ENCODE measurements at regions of chr9 and their contacts with region 1.

Region 1: GRCh38 chr9:26955921-26956859 is at the start of gene IFT74:
- DNase-seq: peak; percentile 81 to 98 (median 94)
- ATAC-seq: peak; percentile 100
- H3K4me3 ChIP-seq: peak within 1 kb of the TSS; percentile 52 to 65
- H3K4me3 Mint-ChIP-seq: peak within 1 kb of the TSS; percentile 87 to 91 (median 89)
- H3K27ac ChIP-seq: peak within 1 kb of the TSS; percentile 67
- H3K27ac Mint-ChIP-seq: peak within 1 kb of the TSS; percentile 93 to 96
- H3K4me1 ChIP-seq: peaks cover 7 to 12% of the 10 kb centered on the region in 2 experiments
- H3K4me1 Mint-ChIP-seq: peaks cover 15 to 39% (median 36%) of the 10 kb centered on the region in 3 donors
- H3K27me3 ChIP-seq: no peaks in the 10 kb centered on the region
- H3K27me3 Mint-ChIP-seq: no peaks in the 10 kb centered on the region
- total RNA-seq, gene IFT74: 6.2 to 11.1 (median 8.9) TPM

Region 2: DNA sequence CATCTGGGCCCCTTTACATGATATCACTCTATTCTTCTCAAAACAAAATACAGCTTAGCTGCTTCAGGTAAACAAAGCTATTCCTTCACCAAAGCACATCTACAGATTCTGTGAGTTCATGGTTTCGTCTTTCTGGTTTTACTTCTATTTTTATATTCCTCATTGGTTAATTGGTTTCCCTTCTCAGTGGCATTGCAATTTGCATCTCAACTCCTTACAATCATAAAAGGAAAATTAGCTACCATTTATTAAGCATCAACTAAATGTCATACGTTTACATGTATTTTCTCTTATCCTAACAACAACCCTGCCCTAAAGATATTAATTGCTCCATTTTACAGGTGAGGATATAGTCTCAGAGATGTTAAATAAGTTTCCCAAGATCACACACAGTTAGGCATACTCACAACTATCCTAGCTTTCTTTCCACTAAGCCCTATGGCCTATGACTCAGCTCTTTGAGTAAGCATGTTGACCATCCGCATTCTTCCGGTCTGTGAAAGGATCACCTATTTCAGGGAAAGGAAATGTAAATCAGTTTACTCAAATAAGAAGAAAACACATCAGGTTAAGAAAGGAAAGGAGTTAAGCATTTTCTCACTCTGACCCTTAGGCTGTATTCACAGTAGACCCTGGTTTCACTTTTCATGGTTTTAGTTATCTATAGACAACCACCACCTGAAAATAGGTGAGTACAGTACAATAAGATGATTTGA is 209.7 kb before region 1 on chr9:
- CTCF ChIA-PET with region 1: no interaction called
- POLR2A ChIA-PET with region 1: no interaction called
- DNase-seq: no peak
- ATAC-seq: no peak
- H3K4me3 ChIP-seq: no peak overlapping the region
- H3K4me3 Mint-ChIP-seq: no peak overlapping the region
- H3K27ac ChIP-seq: no peak overlapping the region
- H3K27ac Mint-ChIP-seq: no peak overlapping the region
- H3K4me1 ChIP-seq: no peaks in the 10 kb centered on the region
- H3K4me1 Mint-ChIP-seq: peaks cover 0 to 4% (median 0%) of the 10 kb centered on the region in 3 donors
- H3K27me3 ChIP-seq: peaks cover 0 to 2% of the 10 kb centered on the region in 2 experiments
- H3K27me3 Mint-ChIP-seq: peaks cover 0 to 5% of the 10 kb centered on the region in 2 donors

Region 3: GRCh38 chr9:26850995-26851394 is 105.2 kb before region 1 on chr9:
- CTCF ChIA-PET with region 1: no interaction called
- POLR2A ChIA-PET with region 1: interaction called in 1 of 2 experiments, 12 read pairs
- DNase-seq: no peak
- ATAC-seq: no peak
- H3K4me3 ChIP-seq: no peak overlapping the region
- H3K4me3 Mint-ChIP-seq: no peak overlapping the region
- H3K27ac ChIP-seq: no peak overlapping the region
- H3K27ac Mint-ChIP-seq: no peak overlapping the region
- H3K4me1 ChIP-seq: no peaks in the 10 kb centered on the region
- H3K4me1 Mint-ChIP-seq: peaks cover 0 to 6% (median 3%) of the 10 kb centered on the region in 3 donors
- H3K27me3 ChIP-seq: no peaks in the 10 kb centered on the region
- H3K27me3 Mint-ChIP-seq: no peaks in the 10 kb centered on the region

Region 4: DNA sequence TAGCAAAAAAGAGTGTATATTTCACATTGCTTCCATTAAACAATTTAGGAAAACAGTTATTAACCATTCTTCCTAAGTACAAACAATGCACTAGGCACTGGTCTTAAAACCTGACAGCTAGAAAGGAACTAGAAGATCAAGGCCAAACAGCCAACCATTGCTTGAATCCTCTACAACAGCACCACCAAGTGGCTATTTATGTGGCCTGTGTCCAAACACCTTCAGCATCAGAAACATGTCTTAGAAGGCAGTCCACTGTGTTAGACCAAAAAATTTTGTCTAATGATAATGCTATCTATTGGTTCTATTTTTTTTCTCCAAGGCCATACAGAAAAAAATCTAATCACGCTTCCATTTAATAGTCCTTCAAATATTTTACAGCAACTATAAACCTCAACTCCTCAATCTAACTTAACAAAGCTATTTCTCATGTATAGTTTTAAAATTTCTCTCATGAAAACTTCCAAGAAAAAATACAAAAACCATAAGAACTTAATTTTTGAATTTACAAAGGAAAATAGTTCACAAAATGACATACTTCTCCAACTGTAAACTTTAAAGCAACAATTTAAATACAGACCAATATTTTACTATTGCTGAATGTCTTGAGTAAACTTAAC is 99.7 kb before region 1 on chr9:
- CTCF ChIA-PET with region 1: no interaction called
- POLR2A ChIA-PET with region 1: interaction called in 1 of 2 experiments, 10 read pairs
- DNase-seq: peak in 1 of 35 experiments; percentile 18
- ATAC-seq: no peak
- H3K4me3 ChIP-seq: no peak overlapping the region
- H3K4me3 Mint-ChIP-seq: no peak overlapping the region
- H3K27ac ChIP-seq: no peak overlapping the region
- H3K27ac Mint-ChIP-seq: no peak overlapping the region
- H3K4me1 ChIP-seq: no peaks in the 10 kb centered on the region
- H3K4me1 Mint-ChIP-seq: peaks cover 0 to 6% (median 3%) of the 10 kb centered on the region in 3 donors
- H3K27me3 ChIP-seq: no peaks in the 10 kb centered on the region
- H3K27me3 Mint-ChIP-seq: no peaks in the 10 kb centered on the region

Region 5: DNA sequence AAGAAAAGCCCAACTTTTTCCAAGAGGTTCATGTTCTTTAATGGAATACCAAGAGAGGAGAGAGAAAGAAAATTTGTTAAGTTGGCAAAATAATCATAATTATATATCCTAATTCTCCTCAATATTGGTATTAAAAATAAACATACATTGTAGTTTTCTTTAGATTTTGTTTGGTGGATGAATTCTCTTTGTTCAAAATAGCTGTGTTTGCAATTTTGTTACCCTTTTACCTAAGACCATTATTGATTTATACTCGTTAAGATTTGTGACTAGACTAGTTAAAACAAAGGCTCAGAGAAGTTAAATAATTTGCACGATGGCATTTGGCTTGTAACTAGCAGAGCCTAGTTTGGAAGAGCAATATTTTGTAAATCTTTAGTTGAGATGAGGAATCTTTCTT is 39.6 kb after region 1 on chr9:
- CTCF ChIA-PET with region 1: no interaction called
- POLR2A ChIA-PET with region 1: no interaction called
- DNase-seq: no peak
- ATAC-seq: no peak
- H3K4me3 ChIP-seq: no peak overlapping the region
- H3K4me3 Mint-ChIP-seq: no peak overlapping the region
- H3K27ac ChIP-seq: no peak overlapping the region
- H3K27ac Mint-ChIP-seq: no peak overlapping the region
- H3K4me1 ChIP-seq: no peaks in the 10 kb centered on the region
- H3K4me1 Mint-ChIP-seq: no peaks in the 10 kb centered on the region
- H3K27me3 ChIP-seq: no peaks in the 10 kb centered on the region
- H3K27me3 Mint-ChIP-seq: no peaks in the 10 kb centered on the region